Aorta (tissue), 5 donors: ENCODE measurements at regions of chr4 and their contacts with region 1.

Region 1: GRCh38 chr4:141133146-141133998 is at the start of gene RNF150:
- DNase-seq: peak; percentile 81 to 89
- ATAC-seq: peak; percentile 92
- H3K4me3 ChIP-seq: peak within 1 kb of the TSS; percentile 69 to 71
- H3K27ac ChIP-seq: peak within 1 kb of the TSS in 1 of 2 donors; percentile 52
- H3K4me1 ChIP-seq: peaks cover 0 to under 1% of the 10 kb centered on the region in 2 donors
- H3K27me3 ChIP-seq: no peaks in the 10 kb centered on the region
- total RNA-seq, gene RNF150: 18.4 to 22.8 TPM

Region 2: DNA sequence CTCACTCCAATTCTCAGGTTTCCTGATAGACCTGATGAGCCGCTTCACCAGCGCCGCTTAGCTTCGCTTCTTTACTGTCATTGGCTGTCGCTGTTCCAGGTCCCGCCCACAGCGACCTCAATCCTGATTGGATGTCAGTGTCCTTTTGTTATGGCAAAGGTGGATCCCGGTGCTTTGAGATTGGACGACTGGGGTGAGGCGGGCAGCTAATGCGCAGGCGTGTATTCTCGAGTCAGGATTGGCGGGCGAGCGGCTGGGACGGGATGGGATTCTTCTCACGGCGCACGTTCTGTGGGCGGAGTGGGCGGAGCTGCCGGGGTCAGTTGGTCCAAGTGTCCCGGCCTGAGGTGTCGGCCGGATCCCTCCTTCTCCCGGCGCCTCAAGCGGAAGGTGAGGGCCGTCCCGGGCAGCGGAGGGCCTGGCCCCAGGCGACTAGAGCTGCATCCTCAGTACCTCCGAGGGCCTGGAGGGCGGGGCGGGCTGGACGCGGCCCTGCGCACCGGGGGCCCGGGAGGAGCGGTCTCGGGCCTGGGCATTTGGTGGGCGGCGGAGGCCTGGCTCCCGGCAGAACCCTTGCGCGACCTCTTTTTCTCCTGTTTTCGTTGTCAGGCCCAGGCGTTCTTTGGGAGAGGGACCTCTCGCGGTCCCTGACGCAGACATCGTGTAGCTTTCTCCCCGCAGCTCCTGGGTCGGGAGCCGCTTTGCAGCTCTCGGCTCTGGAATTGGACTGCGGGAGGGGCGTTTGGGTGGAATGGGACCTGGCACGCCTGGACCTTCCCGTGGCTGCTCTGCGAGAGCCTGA is 759.8 kb before region 1 on chr4 and contains the start of gene SCOC:
- intact Hi-C with region 1: loop called in 1 of 2 experiments (anchors 10 kb)
- DNase-seq: peak; percentile 99
- ATAC-seq: peak; percentile 100
- H3K4me3 ChIP-seq: peak within 1 kb of the TSS; percentile 77 to 89
- H3K27ac ChIP-seq: peak within 1 kb of the TSS; percentile 67 to 83
- H3K4me1 ChIP-seq: peaks cover 0 to 2% of the 10 kb centered on the region in 2 donors
- H3K27me3 ChIP-seq: no peaks in the 10 kb centered on the region
- total RNA-seq, gene SCOC: 38.5 to 45.6 TPM

Region 3: DNA sequence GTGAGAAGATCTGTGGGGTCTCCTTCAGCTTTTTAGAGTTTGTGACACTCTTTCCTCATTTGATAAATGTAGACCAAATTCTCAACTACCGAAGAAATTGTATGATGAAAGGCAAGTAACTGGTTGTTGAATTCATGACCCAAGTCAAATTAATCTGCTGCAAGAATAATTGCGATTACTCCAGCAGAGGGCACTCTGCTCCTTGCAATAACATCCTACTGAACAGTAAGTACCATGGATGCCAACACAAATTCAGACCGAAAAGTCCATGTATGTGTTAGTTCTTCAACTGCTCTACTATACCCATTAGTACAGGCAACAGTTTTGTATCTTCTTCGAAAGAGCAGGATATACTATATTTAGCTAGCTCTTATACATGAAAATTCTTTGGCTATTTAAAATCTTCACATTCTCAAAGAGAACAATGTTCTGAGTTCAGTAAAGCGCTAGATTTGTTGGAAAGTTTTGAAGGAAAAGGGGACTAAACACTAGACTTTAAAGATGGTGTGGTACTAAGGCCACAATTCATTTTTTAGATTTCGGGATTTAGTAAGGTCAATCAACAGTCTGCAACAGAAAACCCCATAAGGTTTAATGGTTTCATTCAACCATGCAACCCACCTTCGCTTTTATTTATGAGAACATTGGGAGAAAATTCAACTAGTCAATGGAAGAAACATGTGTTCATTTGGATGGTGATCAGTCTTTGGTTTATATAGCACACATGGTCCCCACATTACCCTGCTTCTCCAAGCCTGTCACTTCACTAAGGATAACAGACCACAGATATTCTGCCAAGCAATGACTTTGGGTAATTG is 271.8 kb before region 1 on chr4:
- intact Hi-C with region 1: loop called (anchors 1 kb)
- DNase-seq: peak in 1 of 2 donors; percentile 56
- ATAC-seq: peak; percentile 86
- H3K4me3 ChIP-seq: no peak overlapping the region
- H3K27ac ChIP-seq: no peak overlapping the region
- H3K4me1 ChIP-seq: peaks cover 0 to 1% of the 10 kb centered on the region in 2 donors
- H3K27me3 ChIP-seq: no peaks in the 10 kb centered on the region

Region 4: GRCh38 chr4:140928880-140929279 is 204.5 kb before region 1 on chr4:
- intact Hi-C with region 1: loop called in 1 of 2 experiments (anchors 5 kb)
- DNase-seq: peak in 1 of 2 donors; percentile 76
- ATAC-seq: peak; percentile 70
- H3K4me3 ChIP-seq: no peak overlapping the region
- H3K27ac ChIP-seq: no peak overlapping the region
- H3K4me1 ChIP-seq: peaks cover 0 to 4% of the 10 kb centered on the region in 2 donors
- H3K27me3 ChIP-seq: no peaks in the 10 kb centered on the region

Region 5: DNA sequence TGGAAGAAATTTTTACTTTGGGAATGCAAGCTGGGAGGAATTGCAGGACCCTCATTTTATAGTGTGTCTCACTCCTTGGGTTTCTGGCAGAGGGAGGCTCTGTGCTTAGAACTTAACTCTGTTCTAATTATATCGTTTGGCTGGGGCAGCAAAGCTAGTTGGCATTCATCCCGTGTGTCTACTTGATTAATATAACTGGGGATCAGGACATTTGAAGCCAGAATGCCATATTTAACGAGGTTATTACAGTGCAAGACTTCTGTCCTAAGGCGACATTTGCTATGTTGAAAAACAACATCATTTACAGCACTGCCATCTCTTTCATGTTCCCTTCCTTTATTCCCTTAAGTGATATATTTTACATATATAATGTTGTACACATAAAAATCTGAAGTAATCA is 198.1 kb before region 1 on chr4:
- intact Hi-C with region 1: loop called (anchors 5 kb)
- DNase-seq: no peak
- ATAC-seq: peak; percentile 54
- H3K4me3 ChIP-seq: no peak overlapping the region
- H3K27ac ChIP-seq: no peak overlapping the region
- H3K4me1 ChIP-seq: peaks cover 0 to 13% of the 10 kb centered on the region in 2 donors
- H3K27me3 ChIP-seq: no peaks in the 10 kb centered on the region

Region 6: DNA sequence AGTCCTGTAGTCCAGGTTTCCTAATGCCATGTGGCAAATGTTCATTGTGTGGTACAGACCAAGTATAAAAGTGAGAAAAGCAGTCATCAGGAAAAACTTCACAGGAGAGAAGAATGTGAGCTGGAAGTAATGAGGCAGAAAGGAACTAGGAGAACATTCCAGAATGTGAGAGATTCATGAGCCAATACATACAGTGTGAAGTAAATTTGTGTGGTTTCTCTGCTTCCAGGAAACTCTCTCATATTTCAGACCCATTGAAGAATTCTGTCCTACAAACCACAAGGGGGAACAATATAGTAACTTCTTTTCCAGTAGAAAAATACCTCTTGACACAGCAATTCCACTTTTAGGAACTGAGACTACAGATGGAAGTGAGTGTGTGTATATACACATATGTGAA is 136.6 kb before region 1 on chr4:
- intact Hi-C with region 1: loop called (anchors 2 to 5 kb)
- DNase-seq: no peak
- ATAC-seq: no peak
- H3K4me3 ChIP-seq: no peak overlapping the region
- H3K27ac ChIP-seq: no peak overlapping the region
- H3K4me1 ChIP-seq: peaks cover 0 to 12% of the 10 kb centered on the region in 2 donors
- H3K27me3 ChIP-seq: no peaks in the 10 kb centered on the region